Heart right ventricle (tissue), 16 donors: ENCODE measurements at regions of chr9 and their contacts with region 1.

Region 1: DNA sequence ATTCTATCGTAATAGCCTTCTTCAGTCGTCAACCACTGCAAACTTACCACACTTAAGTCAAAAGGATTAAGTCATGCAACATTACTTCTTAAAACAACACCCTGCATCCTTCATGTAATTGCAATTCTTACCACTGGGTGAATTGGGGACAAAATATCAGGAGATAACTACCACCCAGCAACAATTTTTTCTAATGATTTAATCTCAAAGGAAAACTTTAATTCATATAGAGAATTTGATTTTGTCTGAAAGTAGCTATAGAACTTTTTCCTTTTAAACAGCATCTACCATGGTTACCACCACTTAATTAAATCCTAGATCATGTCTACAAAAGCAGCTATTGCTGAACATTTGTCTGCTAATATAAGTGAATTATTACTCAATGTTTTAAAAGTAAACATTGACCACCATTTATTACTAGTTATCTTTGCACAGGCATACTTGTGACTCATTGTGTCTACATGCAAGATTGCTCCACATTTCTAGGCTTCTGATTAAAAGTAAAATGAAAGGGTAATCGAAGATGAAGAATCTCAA is 10.5 kb downstream of the MLLT3 start:
- DNase-seq: no peak
- ATAC-seq: peak in 2 of 8 donors; percentile 29 to 58
- H3K4me3 ChIP-seq: no peak overlapping the region
- H3K27ac ChIP-seq: no peak overlapping the region
- H3K4me1 ChIP-seq: peaks cover 0 to 56% (median 16%) of the 10 kb centered on the region in 9 donors
- H3K27me3 ChIP-seq: no peaks in the 10 kb centered on the region
- CTCF ChIP-seq: peak in 7 of 9 donors; percentile 3 to 48 (median 41)

Region 2: GRCh38 chr9:20356403-20357035 is 255.3 kb before region 1 on chr9:
- intact Hi-C with region 1: loop called in 1 of 10 experiments (anchors 10 kb)
- DNase-seq: peak; percentile 46 to 79
- ATAC-seq: peak; percentile 77 to 95 (median 91)
- H3K4me3 ChIP-seq: peak overlapping the region in 7 of 10 donors; percentile 0 to 42 (median 33)
- H3K27ac ChIP-seq: peak overlapping the region in 9 of 10 donors; percentile 1 to 76 (median 55)
- H3K4me1 ChIP-seq: peaks cover 0 to 38% (median 17%) of the 10 kb centered on the region in 9 donors
- H3K27me3 ChIP-seq: no peaks in the 10 kb centered on the region
- CTCF ChIP-seq: peak; percentile 55 to 87 (median 69)

Region 3: GRCh38 chr9:20479419-20480155 is 132.2 kb before region 1 on chr9:
- intact Hi-C with region 1: no loop called
- DNase-seq: no peak
- ATAC-seq: no peak
- H3K4me3 ChIP-seq: no peak overlapping the region
- H3K27ac ChIP-seq: peak overlapping the region in 1 of 10 donors; percentile 19
- H3K4me1 ChIP-seq: peaks cover 0 to 40% (median 25%) of the 10 kb centered on the region in 9 donors
- H3K27me3 ChIP-seq: no peaks in the 10 kb centered on the region
- CTCF ChIP-seq: no peak

Region 4: DNA sequence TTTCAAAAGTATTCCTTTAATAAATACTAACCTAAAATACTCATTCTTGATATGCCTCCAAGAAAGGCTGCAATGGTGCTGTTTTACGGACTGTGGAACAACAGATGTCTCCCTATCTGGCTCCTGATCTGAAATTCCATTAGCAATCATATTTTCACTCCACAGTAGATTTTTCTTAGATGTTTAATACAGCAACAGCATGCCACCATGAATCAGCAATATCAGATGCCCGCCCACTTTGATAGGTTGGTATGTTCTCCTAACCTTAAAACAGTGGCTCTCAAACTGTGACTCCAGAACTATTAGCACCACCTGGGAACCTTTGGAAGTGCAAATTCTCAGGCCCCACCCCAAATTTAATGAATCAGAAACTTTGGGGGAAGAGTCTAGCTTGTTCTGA is 99.7 kb before region 1 on chr9:
- intact Hi-C with region 1: loop called in 1 of 10 experiments (anchors 10 kb)
- DNase-seq: no peak
- ATAC-seq: peak in 1 of 8 donors; percentile 11
- H3K4me3 ChIP-seq: no peak overlapping the region
- H3K27ac ChIP-seq: peak overlapping the region in 6 of 10 donors; percentile 11 to 55 (median 26)
- H3K4me1 ChIP-seq: peaks cover 3 to 75% (median 29%) of the 10 kb centered on the region in 9 donors
- H3K27me3 ChIP-seq: no peaks in the 10 kb centered on the region
- CTCF ChIP-seq: no peak

Region 5: GRCh38 chr9:20558566-20559016 is 53.2 kb before region 1 on chr9:
- intact Hi-C with region 1: loop called in 1 of 10 experiments (anchors 10 kb)
- DNase-seq: no peak
- ATAC-seq: peak in 3 of 8 donors; percentile 26 to 44 (median 33)
- H3K4me3 ChIP-seq: no peak overlapping the region
- H3K27ac ChIP-seq: no peak overlapping the region
- H3K4me1 ChIP-seq: peaks cover 3 to 59% (median 25%) of the 10 kb centered on the region in 9 donors
- H3K27me3 ChIP-seq: no peaks in the 10 kb centered on the region
- CTCF ChIP-seq: no peak

Region 6: GRCh38 chr9:20622330-20623020 is 10.7 kb after region 1 on chr9 and contains the start of gene MLLT3:
- intact Hi-C with region 1: no loop called
- DNase-seq: peak; percentile 96 to 98
- ATAC-seq: peak; percentile 93 to 99 (median 96)
- H3K4me3 ChIP-seq: peak within 1 kb of the TSS; percentile 66 to 94 (median 88)
- H3K27ac ChIP-seq: peak within 1 kb of the TSS; percentile 82 to 92 (median 85)
- H3K4me1 ChIP-seq: peaks cover 0 to 40% (median 33%) of the 10 kb centered on the region in 9 donors
- H3K27me3 ChIP-seq: peaks cover 0 to 7% (median 0%) of the 10 kb centered on the region in 7 donors
- CTCF ChIP-seq: peak in 5 of 9 donors; percentile 7 to 42 (median 35)
- total RNA-seq, gene MLLT3: 6.3 to 22.7 (median 14.7) TPM